Ascending aorta (tissue), 2 donors: ENCODE measurements at regions of chr5 and their contacts with region 1.

Region 1: GRCh38 chr5:147558826-147559225 is 49.0 kb upstream of the DPYSL3 start:
- DNase-seq: peak in 1 of 2 donors; percentile 78
- H3K4me3 ChIP-seq: no peak overlapping the region
- H3K27ac ChIP-seq: peak overlapping the region in 1 of 2 donors; percentile 19
- H3K4me1 ChIP-seq: peaks cover 2 to 11% of the 10 kb centered on the region in 2 donors
- H3K27me3 ChIP-seq: no peaks in the 10 kb centered on the region
- CTCF ChIP-seq: peak; percentile 71 to 75 (median 71)

Region 2: GRCh38 chr5:147223948-147224791 is 334.7 kb before region 1 on chr5:
- intact Hi-C with region 1: loop called (anchors 5 kb)
- DNase-seq: no peak
- H3K4me3 ChIP-seq: no peak overlapping the region
- H3K27ac ChIP-seq: no peak overlapping the region
- H3K4me1 ChIP-seq: no peaks in the 10 kb centered on the region
- H3K27me3 ChIP-seq: no peaks in the 10 kb centered on the region
- CTCF ChIP-seq: peak; percentile 68 to 83 (median 74)

Region 3: GRCh38 chr5:147303976-147304375 is 254.8 kb before region 1 on chr5:
- intact Hi-C with region 1: loop called (anchors 5 kb)
- DNase-seq: peak in 1 of 2 donors; percentile 81
- H3K4me3 ChIP-seq: no peak overlapping the region
- H3K27ac ChIP-seq: peak overlapping the region; percentile 77 to 88
- H3K4me1 ChIP-seq: peaks cover 0 to 31% of the 10 kb centered on the region in 2 donors
- H3K27me3 ChIP-seq: no peaks in the 10 kb centered on the region
- CTCF ChIP-seq: no peak

Region 4: GRCh38 chr5:147403651-147404640 is 154.9 kb before region 1 on chr5:
- intact Hi-C with region 1: loop called (anchors 5 kb)
- DNase-seq: peak; percentile 76 to 94
- H3K4me3 ChIP-seq: peak overlapping the region; percentile 7 to 36
- H3K27ac ChIP-seq: peak overlapping the region; percentile 94 to 98
- H3K4me1 ChIP-seq: peaks cover 22 to 50% of the 10 kb centered on the region in 2 donors
- H3K27me3 ChIP-seq: no peaks in the 10 kb centered on the region
- CTCF ChIP-seq: no peak

Region 5: GRCh38 chr5:147509710-147510651 is 48.8 kb before region 1 on chr5 and contains the start of gene DPYSL3:
- intact Hi-C with region 1: loop called (anchors 2 kb)
- DNase-seq: peak; percentile 22 to 88
- H3K4me3 ChIP-seq: peak within 1 kb of the TSS; percentile 65 to 70
- H3K27ac ChIP-seq: peak within 1 kb of the TSS; percentile 81 to 83
- H3K4me1 ChIP-seq: peaks cover 0 to 2% of the 10 kb centered on the region in 2 donors
- H3K27me3 ChIP-seq: no peaks in the 10 kb centered on the region
- CTCF ChIP-seq: peak in 2 of 3 experiments; percentile 47 to 60
- total RNA-seq, gene DPYSL3: 110 TPM

Region 6: GRCh38 chr5:147805030-147805454 is 246.2 kb after region 1 on chr5:
- intact Hi-C with region 1: no loop called
- DNase-seq: no peak
- H3K4me3 ChIP-seq: no peak overlapping the region
- H3K27ac ChIP-seq: no peak overlapping the region
- H3K4me1 ChIP-seq: no peaks in the 10 kb centered on the region
- H3K27me3 ChIP-seq: no peaks in the 10 kb centered on the region
- CTCF ChIP-seq: no peak

Region 7: DNA sequence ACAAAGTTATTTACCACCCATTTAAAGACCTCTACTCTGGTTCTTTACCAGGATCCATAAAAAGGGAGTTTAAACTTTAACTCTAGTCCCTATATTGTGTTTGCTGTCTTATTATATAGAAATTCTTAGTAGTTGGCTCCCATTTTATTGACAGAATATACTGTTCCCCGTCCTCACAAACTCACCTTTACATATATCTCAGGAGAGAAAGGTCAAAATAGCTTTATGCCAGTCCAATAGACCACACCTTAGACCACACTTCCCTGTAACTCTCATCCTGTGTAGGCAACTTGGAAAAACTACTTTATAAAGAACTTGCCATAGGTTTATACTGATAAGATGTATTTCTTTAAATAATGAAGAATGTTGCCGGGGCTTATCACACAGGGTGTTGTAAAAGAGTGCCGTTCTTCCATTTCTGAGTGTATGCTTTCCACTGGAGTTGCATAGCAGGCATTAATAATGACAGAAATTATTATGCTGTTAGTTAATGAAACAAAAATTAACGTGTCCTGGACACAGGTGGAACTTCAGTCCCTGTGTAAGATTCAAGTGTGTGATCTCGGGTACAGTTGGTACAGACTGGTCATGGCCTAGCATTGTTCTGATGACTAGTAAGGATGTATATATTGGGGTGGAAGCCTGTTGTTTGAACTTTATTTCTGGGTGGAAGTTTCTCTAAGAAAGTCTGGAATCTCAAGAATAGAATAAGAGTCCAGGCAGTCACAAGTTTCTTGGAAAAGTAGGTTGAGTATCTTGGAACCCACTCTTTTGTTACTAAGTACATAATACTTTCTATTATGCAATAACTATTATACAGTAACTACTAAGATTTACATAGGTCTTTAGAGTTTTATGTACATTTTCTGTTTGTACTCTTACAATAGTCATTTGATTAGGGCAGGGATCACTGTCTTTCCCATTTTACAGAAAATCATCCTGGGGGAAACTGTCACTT is 576.5 kb after region 1 on chr5:
- intact Hi-C with region 1: no loop called
- DNase-seq: no peak
- H3K4me3 ChIP-seq: no peak overlapping the region
- H3K27ac ChIP-seq: no peak overlapping the region
- H3K4me1 ChIP-seq: no peaks in the 10 kb centered on the region
- H3K27me3 ChIP-seq: no peaks in the 10 kb centered on the region
- CTCF ChIP-seq: no peak